ENCODE measurements at regions of chr19 and their contacts with region 1.

Region 1: DNA sequence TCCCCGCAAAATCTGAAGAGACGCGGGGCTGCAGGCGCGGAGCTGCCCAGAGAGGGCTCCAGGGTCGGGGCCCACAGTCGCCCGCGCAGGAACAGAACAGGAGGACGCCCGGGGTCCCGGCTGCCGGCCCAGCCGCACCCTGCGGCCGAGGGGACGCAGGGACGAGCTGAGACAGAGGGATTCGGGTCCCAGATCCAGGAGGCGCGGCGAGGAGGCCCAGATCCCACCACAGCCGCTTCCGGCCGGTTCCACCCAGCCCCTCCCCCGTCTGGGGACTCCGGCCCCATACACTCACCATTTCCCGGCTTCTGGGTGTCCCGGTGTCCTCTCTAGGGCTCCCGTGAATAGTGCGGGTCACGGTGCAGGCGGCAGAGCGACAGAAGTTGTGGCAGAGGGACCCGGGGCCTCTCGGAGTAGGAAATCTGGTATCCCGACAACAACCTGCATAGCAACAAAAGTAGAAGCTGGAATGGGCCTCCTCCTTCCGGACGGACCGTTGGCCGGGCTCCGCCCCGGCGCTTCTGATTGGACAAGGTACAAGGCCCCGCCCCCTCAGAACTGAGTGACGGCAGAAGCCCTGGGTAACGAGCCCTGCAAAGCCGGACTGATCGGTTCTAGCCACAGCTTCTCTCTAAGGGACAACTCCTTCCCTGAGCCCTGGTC is at the start of gene ZNF20:
- DNase-seq: peak; percentile 99
- total RNA-seq, gene ZNF20: 1.6 TPM

Region 2: DNA sequence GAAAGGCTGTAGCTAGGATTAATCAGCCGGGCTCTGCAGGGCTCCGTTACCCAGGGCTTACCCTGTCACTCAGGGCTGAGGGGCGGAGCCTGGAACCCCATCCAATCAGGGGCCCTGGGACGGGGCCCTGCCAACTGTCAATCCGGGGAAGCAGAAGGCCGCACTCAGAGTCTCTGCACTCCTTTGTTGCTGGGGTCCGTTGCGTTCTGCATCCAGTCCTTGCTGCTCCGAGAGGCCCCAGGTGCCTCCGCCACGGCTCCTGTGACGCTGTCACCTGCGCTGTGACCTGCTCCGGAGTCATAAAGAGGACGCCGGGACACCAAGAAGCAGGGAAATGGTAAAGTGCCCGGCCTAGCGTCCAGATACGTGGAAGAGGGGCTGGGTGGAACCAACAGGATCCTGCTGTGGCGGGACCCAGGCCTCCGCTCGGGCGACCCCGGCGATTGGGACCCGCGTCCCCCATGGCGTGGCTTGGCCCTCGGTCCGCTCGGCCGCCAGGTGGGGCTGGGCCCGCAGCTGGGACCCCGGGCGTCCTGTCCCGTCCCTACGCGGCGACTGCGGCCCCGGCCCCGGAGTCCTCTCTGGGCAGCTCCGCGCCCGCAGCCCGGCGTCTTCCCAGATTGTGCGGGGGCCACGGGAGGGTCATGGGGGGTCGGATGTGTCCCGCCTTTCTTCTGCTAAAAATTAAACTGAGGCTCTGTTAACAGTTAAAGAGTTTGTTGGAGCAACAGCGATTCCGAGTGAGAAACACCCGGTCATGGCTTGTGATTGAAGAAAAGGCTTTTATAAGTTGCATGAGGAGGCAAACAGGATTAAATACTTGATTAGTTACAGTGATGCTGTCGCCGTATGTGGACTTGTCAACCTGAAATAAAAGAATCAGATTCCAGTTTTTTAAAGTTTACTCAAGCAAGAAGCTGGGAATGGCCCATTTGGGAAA is 341.4 kb before region 1 on chr19 and contains the start of gene ZNF491:
- intact Hi-C with region 1: loop called (anchors 5 kb)
- DNase-seq: peak; percentile 96
- total RNA-seq, gene ZNF491: 1.8 TPM

Region 3: GRCh38 chr19:11881151-11881800 is 258.7 kb before region 1 on chr19:
- intact Hi-C with region 1: loop called (anchors 5 kb)
- DNase-seq: peak; percentile 75

Region 4: DNA sequence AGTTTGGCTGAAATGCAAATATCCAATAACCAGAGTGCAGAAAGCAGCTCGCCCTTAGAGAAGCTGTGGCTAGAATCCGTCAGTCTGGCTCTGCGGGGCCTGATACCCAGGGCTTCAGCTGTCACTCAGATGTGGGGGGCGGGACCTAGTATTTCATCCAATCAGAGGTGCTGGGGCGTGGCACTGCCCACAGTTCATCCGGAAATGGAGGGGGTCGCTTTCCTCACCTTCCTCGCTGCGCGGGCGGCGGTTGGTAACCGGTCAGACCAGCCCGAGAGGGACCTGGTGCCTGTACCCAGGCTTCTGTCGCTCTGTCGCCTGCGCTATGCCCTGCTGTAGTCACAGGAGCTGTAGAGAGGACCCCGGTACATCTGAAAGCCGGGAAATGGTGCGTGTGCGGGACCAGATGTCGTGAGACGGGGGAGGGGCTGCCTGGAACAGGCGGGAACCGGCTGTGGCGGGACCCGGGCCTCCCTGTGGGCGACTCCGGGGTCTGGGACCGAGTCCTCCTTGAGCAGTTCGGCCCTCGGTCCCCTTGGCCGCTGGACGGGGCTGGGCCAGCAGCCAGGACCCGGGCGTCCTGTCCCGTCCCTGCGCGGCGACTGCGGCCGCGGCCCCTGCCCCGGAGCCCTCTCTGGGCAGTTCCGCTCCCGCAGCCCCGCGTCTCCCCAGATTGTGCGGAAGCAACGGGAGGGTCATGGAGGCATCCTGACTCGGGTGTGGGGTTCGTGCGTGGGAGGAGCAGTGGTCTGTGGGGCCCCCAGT is 214.9 kb before region 1 on chr19 and contains the start of gene ZNF700:
- intact Hi-C with region 1: loop called (anchors 2 kb)
- DNase-seq: peak; percentile 96
- total RNA-seq, gene ZNF700: 5.1 TPM

Region 5: GRCh38 chr19:11964858-11965645 is 175.0 kb before region 1 on chr19 and contains the start of gene ZNF763:
- intact Hi-C with region 1: loop called (anchors 2 kb)
- DNase-seq: peak; percentile 97
- total RNA-seq, gene ZNF763: 3.1 TPM

Region 6: DNA sequence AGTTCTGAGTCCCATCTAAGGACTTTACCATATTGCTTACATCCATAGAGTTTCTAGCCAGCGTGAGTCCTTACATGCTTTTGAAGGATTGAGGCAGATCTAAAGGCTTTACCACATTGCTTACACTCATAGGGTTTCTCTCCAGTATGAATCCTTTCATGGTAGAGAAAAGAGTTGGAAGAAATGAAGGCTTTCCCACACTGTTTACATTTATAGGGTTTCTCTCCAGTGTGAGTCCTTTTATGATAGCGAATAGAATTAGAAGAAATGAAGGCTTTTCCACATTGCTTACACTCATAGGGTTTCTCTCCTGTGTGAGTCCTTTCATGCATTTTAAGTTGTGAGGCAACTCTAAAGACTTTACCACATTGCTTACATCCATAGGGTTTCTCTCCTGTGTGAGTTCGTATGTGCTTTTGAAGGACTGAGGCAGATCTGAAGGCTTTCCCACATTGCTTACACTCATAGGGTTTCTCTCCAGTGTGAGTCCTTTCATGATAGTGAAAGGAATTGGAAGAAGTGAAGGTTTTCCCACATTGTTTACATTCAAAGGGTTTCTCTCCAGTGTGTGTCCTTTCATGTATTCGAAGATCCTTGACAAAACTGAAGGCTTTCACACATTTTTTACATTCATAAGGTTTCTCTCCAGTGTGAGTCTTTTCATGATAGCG is 96.1 kb before region 1 on chr19:
- intact Hi-C with region 1: no loop called
- DNase-seq: no peak

Region 7: GRCh38 chr19:12055783-12056182 is 84.2 kb before region 1 on chr19:
- intact Hi-C with region 1: loop called (anchors 2 kb)
- DNase-seq: no peak

Region 8: DNA sequence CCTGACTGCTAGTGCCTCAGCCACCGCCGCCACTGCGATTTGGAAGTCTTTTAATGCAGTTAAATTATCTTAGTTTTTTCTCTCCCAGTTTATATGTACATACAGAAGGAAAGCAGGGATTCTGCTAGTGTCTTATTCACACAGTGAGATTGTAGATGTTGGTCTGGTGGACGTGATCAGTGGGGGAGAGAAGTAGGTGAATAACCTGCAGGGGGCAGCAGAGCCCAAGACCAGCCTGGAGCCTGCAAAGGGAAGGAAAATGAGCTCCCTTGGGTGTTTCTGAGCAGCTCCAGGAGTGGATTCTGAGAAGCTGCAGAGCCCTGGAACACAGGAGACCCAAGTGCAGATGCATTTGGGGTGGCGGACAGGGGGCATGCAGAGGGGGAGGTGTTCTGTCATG is 49.2 kb before region 1 on chr19:
- intact Hi-C with region 1: loop called (anchors 2 kb)
- DNase-seq: peak; percentile 81

Measured in cardiac septum (tissue), 1 donor.